ENCODE measurements at regions of chr5 and their contacts with region 1.

Region 1: DNA sequence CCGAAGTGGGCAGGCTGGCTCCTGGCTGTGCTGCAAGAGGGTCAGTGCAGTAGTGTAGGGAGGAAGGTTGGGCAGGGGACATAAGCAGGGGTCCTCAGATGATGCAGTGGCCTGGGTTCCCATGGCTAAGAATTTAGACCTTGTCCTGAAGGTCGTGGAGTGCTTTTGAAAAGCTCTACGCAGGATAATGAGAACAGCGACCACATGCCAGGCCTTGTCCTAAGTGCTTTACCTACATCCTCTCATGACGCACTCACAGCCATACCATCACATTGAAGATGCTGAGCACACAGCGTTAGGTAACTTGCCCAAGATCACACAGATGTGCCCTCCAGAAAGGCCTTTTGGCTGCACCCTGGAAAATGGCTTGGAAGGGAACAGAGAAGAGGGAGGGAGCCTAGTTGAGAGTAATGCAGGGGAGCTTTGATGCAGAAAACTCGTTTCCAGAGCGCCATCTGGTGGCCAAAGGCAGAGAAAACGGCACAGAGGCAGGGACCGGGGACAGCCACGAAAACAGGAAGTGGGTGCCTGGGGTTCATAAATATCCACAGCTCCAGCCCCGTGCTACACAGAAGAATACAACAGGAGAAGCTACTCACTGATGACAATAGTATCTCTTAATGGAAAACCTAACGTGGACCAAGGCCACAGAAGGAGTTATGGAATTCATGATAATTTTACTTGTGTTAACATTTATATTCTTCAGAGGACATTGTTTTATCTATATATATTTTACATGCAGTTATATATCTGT is 2.6 kb upstream of the PCDH12 start:
- DNase-seq: peak; percentile 85

Region 2: DNA sequence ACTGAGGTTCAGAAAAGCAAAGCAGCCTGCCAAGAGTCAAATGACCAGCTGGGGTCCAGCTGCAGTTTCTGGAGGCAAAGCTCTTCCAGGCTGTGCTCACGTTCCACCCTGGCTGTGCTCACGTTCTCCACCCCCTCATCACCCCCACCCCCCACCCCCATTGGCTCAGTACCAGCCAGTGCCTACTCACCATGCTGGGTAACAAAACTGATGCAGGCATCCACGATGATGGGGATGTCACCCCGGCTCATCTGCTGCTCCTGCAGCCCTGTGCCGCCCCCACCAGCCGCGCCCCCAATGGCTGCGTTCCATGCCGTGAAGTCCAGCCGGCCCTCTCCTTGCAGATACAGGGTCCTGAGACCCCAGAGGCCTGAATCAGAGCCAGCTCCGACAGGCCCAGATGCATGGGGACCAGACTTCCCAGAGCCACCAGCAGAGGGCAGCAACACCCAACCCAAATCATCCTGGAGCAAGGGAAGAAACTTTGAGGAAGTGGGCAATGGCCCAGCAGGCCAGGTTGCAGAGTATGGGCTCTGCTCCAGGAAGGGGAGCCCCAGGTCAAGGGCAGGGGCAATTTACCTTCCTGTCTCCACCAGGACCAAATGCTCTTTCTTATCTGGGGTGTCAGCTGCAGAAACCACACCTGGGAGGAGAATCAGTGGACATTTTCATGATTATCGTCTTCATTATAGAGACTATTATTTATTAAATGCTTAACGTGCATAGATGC is 295.7 kb before region 1 on chr5:
- CTCF ChIA-PET with region 1: interaction called, 15 read pairs
- POLR2A ChIA-PET with region 1: no interaction called
- DNase-seq: peak; percentile 84

Region 3: DNA sequence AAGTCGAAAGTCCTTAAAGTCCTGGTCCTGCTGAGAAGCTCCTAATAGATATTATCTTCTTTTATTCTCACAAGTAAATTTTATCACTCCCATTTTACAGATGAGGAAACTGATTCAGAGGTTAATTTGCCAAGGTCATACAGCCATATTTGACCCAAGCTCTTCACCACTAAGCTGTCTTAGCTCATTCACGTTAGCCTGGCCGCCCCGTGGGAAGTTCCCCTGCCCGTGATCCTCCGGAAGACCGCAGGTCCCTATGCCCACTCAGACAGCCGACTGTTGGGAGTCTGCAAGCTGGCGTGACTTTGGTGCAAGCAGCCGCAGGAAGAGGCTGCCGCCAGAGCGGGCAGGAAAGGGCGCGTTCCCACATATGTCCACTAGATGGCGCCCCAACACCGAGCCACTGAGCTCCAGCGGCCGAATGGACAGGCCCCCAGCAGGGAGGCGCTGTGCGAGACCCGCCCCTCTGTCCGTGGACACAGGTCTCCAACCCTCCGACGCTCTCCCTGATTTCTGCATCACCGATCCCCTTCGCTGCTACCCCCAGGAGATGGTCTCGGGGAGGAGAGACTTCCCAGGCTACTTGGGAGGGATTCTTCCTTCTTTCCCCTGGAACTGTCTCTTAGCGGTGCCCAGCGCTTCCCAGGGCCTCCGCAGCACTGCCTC is 268.6 kb before region 1 on chr5:
- CTCF ChIA-PET with region 1: interaction called, 25 read pairs
- POLR2A ChIA-PET with region 1: no interaction called
- DNase-seq: peak; percentile 89

Region 4: DNA sequence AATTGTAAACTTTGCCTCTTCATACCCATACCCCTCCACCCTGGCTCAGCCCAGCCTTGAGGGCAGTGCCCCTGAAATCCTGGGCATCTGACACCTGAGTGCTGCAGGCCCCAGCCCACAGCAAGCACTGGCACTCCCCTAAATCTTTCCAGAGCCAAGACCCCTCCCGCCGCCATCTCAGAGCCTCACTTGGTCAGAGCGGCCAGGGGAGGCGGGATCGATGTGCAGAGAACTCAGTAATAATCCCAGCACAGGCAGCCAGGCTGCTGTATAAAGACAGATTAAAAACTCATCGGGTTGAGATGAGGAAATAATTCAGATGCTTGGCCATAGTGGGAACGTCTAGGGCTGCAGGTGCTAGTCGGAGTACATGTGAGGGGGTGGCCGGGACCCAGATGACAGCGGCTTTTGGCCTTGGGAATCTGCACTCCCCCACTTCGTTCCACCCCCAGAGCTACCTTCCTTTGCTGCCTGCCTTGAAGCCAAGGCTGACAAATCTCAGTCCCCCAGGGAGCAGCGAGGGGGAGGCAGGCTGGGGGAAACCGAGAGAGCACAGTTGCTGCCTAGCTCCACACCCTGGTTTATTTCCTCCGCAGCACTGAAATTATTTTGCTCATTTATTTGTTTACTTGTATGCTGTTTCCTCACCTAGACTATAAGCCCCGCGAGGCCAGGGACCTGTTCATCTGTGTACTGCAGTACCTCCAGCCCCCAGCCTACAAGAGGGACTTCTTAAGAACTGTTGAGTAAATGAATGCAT is 259.1 kb before region 1 on chr5:
- CTCF ChIA-PET with region 1: interaction called, 10 read pairs
- POLR2A ChIA-PET with region 1: no interaction called
- DNase-seq: no peak

Measured in HEK293T (cell line).